T-cell (primary cell): ENCODE measurements at regions of chr17 and their contacts with region 1.

Region 1: DNA sequence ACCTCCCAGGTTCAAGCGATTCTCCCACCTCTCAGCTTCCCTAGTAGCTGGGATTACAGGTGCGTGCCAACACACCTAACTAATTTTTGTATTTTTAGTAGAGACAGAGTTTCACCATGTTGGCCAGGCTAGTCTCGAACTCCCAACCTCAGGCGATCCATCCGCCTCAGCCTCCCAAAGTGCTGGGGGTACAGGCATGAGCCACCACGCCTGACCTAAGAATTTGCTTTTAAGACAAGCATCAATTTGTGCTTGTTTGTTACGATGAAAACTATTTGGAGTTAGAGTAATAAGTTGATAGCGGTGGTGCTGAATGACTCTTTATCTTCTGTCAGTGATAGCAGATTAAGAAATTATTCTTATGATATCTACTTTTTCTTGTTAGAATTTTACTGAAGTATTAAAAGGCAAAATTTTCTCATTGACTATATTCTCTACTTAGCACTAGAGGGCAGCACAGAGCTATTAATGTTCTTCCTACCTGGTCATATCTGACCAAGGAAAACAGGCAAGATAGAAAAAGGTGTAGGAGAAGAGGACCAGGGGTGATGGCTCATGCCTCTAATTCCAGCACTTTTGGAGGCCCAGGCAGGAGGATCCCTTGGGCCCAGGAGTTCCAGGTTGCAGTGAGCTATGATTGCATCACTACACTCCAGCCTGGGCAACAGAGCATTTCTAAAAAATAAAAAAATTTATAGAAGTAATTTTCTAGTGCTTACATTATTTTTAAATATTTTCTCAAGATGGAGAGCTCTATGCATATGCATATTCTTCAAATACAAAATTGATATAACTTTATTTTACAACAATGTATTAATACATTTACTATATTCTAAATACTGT is 24.5 kb downstream of the STXBP4 start:
- DNase-seq: peak in 5 of 35 experiments; percentile 6 to 74 (median 9)
- ATAC-seq: peak in 3 of 4 experiments; percentile 37 to 54 (median 46)
- H3K4me3 ChIP-seq: no peak overlapping the region
- H3K4me3 Mint-ChIP-seq: no peak overlapping the region
- H3K27ac ChIP-seq: no peak overlapping the region
- H3K27ac Mint-ChIP-seq: no peak overlapping the region
- H3K4me1 ChIP-seq: no peaks in the 10 kb centered on the region
- H3K4me1 Mint-ChIP-seq: no peaks in the 10 kb centered on the region
- H3K27me3 ChIP-seq: no peaks in the 10 kb centered on the region
- H3K27me3 Mint-ChIP-seq: no peaks in the 10 kb centered on the region

Region 2: GRCh38 chr17:55005520-55005919 is 12.5 kb after region 1 on chr17:
- CTCF ChIA-PET with region 1: interaction called, 8 to 17 read pairs
- POLR2A ChIA-PET with region 1: no interaction called
- DNase-seq: peak in 1 of 35 experiments; percentile 14
- ATAC-seq: no peak
- H3K4me3 ChIP-seq: no peak overlapping the region
- H3K4me3 Mint-ChIP-seq: no peak overlapping the region
- H3K27ac ChIP-seq: no peak overlapping the region
- H3K27ac Mint-ChIP-seq: no peak overlapping the region
- H3K4me1 ChIP-seq: peaks cover 0 to 3% of the 10 kb centered on the region in 2 experiments
- H3K4me1 Mint-ChIP-seq: no peaks in the 10 kb centered on the region
- H3K27me3 ChIP-seq: no peaks in the 10 kb centered on the region
- H3K27me3 Mint-ChIP-seq: no peaks in the 10 kb centered on the region

Region 3: GRCh38 chr17:55295411-55296170 is 302.6 kb after region 1 on chr17:
- CTCF ChIA-PET with region 1: interaction called, 6 to 31 read pairs
- POLR2A ChIA-PET with region 1: no interaction called
- DNase-seq: peak in 33 of 35 experiments; percentile 5 to 74 (median 38)
- ATAC-seq: peak; percentile 51 to 74 (median 68)
- H3K4me3 ChIP-seq: no peak overlapping the region
- H3K4me3 Mint-ChIP-seq: no peak overlapping the region
- H3K27ac ChIP-seq: no peak overlapping the region
- H3K27ac Mint-ChIP-seq: no peak overlapping the region
- H3K4me1 ChIP-seq: no peaks in the 10 kb centered on the region
- H3K4me1 Mint-ChIP-seq: peaks cover 0 to 5% (median 0%) of the 10 kb centered on the region in 3 donors
- H3K27me3 ChIP-seq: no peaks in the 10 kb centered on the region
- H3K27me3 Mint-ChIP-seq: peaks cover 0 to 11% of the 10 kb centered on the region in 2 donors

Region 4: DNA sequence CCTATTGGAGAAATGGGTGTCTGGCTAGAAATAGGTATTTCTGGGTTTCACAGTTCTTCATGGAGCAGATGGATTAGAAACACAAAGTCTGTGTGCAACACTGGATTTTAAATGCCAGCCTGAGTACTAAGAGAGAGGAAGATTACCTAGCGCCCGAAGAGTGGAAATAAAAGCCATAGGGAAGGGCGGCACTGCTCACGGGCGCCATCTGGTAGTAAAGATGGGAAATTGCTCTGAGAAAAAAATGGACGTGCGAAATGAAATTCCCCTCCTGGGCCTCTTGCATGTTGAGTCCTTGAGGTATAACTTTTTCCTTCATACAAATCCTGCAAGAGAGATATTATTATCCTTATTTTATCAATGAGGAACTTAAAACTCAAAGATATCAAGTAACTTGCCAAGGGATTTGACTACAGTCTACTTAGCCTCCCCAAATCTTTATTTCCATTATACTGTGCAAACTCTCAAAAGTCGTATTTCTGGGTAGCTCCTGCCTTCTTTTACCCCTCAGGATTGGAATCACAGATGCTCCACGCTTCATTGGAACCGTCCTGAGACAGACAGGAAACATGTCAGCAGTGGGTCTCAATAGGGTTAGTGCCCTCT is 355.8 kb after region 1 on chr17:
- CTCF ChIA-PET with region 1: interaction called, 5 to 35 read pairs
- POLR2A ChIA-PET with region 1: no interaction called
- DNase-seq: peak in 28 of 35 experiments; percentile 2 to 67 (median 16)
- ATAC-seq: peak in 2 of 4 experiments; percentile 25 to 56
- H3K4me3 ChIP-seq: no peak overlapping the region
- H3K4me3 Mint-ChIP-seq: no peak overlapping the region
- H3K27ac ChIP-seq: no peak overlapping the region
- H3K27ac Mint-ChIP-seq: no peak overlapping the region
- H3K4me1 ChIP-seq: peaks cover 0 to 7% of the 10 kb centered on the region in 2 experiments
- H3K4me1 Mint-ChIP-seq: peaks cover 20 to 40% (median 22%) of the 10 kb centered on the region in 3 donors
- H3K27me3 ChIP-seq: no peaks in the 10 kb centered on the region
- H3K27me3 Mint-ChIP-seq: peaks cover 0 to 11% of the 10 kb centered on the region in 2 donors

Region 5: GRCh38 chr17:55356434-55357328 is 363.7 kb after region 1 on chr17:
- CTCF ChIA-PET with region 1: interaction called, 16 to 35 read pairs
- POLR2A ChIA-PET with region 1: no interaction called
- DNase-seq: peak; percentile 10 to 75 (median 55)
- ATAC-seq: peak; percentile 73 to 79 (median 78)
- H3K4me3 ChIP-seq: no peak overlapping the region
- H3K4me3 Mint-ChIP-seq: no peak overlapping the region
- H3K27ac ChIP-seq: no peak overlapping the region
- H3K27ac Mint-ChIP-seq: no peak overlapping the region
- H3K4me1 ChIP-seq: no peaks in the 10 kb centered on the region
- H3K4me1 Mint-ChIP-seq: peaks cover 0 to 2% (median 2%) of the 10 kb centered on the region in 3 donors
- H3K27me3 ChIP-seq: peaks cover 0 to 4% of the 10 kb centered on the region in 2 experiments
- H3K27me3 Mint-ChIP-seq: peaks cover 8 to 9% of the 10 kb centered on the region in 2 donors